ENCODE measurements at regions of chr22 and their contacts with region 1.

Region 1: DNA sequence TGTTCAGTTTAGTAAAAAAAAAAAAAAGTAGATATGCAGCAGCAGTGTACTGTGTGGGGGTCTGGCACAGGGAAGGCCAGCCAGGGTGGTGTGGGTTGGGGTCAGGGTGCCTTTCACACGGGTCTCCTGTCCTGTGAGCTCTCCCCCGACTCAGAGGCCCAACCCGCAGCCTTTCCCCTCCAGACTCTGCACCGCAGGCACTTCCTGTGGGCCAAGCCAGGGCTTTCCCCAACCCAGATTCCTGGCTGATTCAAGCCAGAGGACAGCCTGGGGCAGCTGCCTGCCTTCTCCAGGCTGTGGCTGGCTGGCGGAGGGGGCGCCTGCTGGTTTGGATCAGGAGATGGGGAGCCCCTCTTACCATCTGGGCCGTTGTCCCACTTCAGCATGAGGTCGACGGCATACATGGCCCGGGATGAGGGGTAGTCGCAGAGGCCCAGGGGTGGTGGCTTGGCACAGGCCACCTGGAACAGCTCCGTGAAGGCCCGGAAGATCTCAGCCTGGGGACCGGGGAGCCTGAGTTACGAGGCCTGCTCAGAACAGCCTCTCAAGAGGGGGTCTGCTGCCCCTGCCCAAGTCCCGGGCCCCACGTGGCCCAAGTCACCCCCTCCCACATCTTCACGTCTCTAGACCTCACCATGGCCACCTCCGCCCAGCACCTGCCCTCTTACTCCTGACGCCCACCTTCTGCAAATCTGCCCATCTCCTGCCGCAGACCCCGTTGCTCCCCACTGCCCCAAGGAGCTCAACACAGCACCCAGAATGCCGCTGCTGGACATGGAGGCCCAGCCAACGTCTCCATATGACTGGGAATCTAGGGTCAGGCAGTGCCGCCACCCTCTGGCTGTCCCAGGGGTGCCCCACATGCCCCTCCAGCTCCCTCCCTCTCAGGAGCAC is 17.3 kb downstream of the TSPO start:
- DNase-seq: no peak
- H3K4me3 ChIP-seq: no peak overlapping the region
- H3K27ac ChIP-seq: no peak overlapping the region; the same call in 1 of the 2 replicates
- H3K4me1 ChIP-seq: no peaks in the 10 kb centered on the region
- H3K27me3 ChIP-seq: no peaks in the 10 kb centered on the region
- CTCF ChIP-seq: no peak
- EP300 ChIP-seq: no peak
- POLR2A ChIP-seq: no peak
- RAD21 ChIP-seq: no peak

Region 2: DNA sequence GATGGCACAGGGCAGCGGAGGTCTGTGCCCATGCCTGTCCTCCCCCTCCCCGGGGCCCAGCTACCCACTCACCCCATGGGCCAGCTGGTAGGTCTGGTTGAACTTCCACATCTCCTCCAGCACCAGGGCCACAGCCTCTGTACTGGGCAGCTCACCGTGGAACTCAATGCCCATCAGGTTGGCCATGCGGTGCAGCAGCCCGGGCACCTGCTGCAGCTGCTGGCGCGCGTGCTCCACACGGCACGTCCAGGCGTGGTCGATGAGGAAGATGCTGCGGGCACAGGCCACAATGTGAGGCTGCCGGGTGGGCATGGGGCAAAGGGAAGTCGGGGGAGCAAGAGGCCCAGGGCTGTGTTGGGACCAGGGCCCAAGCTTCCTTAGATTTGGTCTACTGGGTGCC is 12.0 kb after region 1 on chr22:
- CTCF ChIA-PET with region 1: interaction called, 5 read pairs
- POLR2A ChIA-PET with region 1: interaction called, 29 read pairs
- DNase-seq: no peak
- H3K4me3 ChIP-seq: no peak overlapping the region
- H3K27ac ChIP-seq: no peak overlapping the region
- H3K4me1 ChIP-seq: peaks cover 0 to 8% (median 3%) of the 10 kb centered on the region in 4 experiments; a peak in 5 of 7 replicates
- H3K27me3 ChIP-seq: no peaks in the 10 kb centered on the region
- CTCF ChIP-seq: no peak
- EP300 ChIP-seq: no peak
- POLR2A ChIP-seq: no peak
- RAD21 ChIP-seq: no peak

Region 3: GRCh38 chr22:43187171-43188099 is 18.8 kb after region 1 on chr22:
- CTCF ChIA-PET with region 1: interaction called, 3 read pairs
- POLR2A ChIA-PET with region 1: interaction called, 29 read pairs
- DNase-seq: peak; percentile 87 to 96
- H3K4me3 ChIP-seq: peak overlapping the region; percentile 34 to 62 (median 40); a peak in 7 of 8 replicates
- H3K27ac ChIP-seq: peak overlapping the region; percentile 53; the same call in 1 of the 2 replicates
- H3K4me1 ChIP-seq: peaks cover 0 to 14% (median 5%) of the 10 kb centered on the region in 4 experiments; a peak in 4 of 7 replicates
- H3K27me3 ChIP-seq: no peaks in the 10 kb centered on the region; a peak in 1 of 7 replicates
- CTCF ChIP-seq: peak; percentile 59 to 64 (median 60)
- EP300 ChIP-seq: peak in 1 of 2 experiments; percentile 5; a peak in 1 of 3 replicates
- POLR2A ChIP-seq: peak; percentile 26 to 68
- RAD21 ChIP-seq: peak; percentile 22 to 35; a peak in 3 of 4 replicates

Measured in H1 (cell line).